Activated CD4-positive, alpha-beta T cell treated with anti-CD3 and anti-CD28 coated beads for 36 hours (primary cell): ENCODE measurements at regions of chr10 and their contacts with region 1.

Region 1: DNA sequence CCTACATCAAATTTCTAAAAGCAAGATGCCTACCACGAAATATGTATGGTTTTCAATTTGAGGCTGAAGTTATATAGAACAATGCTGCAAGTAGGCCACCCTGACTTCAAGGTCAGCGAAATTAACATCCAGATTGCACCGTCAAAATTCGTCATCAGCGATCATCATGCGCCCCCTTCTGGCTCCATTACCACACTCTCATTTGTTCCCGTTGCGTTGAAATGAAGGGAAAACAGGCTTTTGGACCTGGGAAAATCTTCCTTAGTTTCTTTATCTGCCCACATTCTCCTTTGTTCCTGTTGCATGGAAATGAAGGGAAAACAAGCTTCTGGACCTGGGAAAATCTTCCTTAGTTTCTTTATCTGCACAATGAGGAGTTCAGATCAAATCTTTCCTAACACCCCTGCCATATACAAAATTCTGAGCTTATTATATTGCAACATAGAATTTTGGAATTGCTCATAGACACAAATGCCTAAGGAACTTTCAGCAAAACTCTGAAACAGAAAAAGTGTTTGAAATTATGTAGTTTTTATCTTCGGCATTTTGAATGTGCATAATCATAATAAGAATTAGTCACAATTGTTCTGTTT is 98.2 kb upstream of the PRKCQ start:
- DNase-seq: peak; percentile 80
- ATAC-seq: peak; percentile 39
- H3K4me3 Mint-ChIP-seq: no peak overlapping the region
- H3K27ac Mint-ChIP-seq: no peak overlapping the region
- H3K4me1 Mint-ChIP-seq: peaks cover 6% of the 10 kb centered on the region
- H3K27me3 Mint-ChIP-seq: no peaks in the 10 kb centered on the region

Region 2: GRCh38 chr10:5216801-5217200 is 1461.5 kb before region 1 on chr10:
- CTCF ChIA-PET with region 1: no interaction called
- POLR2A ChIA-PET with region 1: no interaction called
- intact Hi-C with region 1: no loop called
- DNase-seq: no peak
- ATAC-seq: no peak
- H3K4me3 Mint-ChIP-seq: no peak overlapping the region
- H3K27ac Mint-ChIP-seq: no peak overlapping the region
- H3K4me1 Mint-ChIP-seq: no peaks in the 10 kb centered on the region
- H3K27me3 Mint-ChIP-seq: no peaks in the 10 kb centered on the region

Region 3: GRCh38 chr10:6108603-6109443 is 569.5 kb before region 1 on chr10:
- CTCF ChIA-PET with region 1: no interaction called
- POLR2A ChIA-PET with region 1: no interaction called
- intact Hi-C with region 1: loop called in 1 of 2 experiments (anchors 10 kb)
- DNase-seq: peak; percentile 45
- ATAC-seq: peak; percentile 63
- H3K4me3 Mint-ChIP-seq: no peak overlapping the region
- H3K27ac Mint-ChIP-seq: peak overlapping the region; percentile 89
- H3K4me1 Mint-ChIP-seq: peaks cover 31% of the 10 kb centered on the region
- H3K27me3 Mint-ChIP-seq: no peaks in the 10 kb centered on the region

Region 4: GRCh38 chr10:6416892-6417512 is 261.3 kb before region 1 on chr10:
- CTCF ChIA-PET with region 1: interaction called, 15 read pairs
- POLR2A ChIA-PET with region 1: no interaction called
- intact Hi-C with region 1: loop called (anchors 1 kb)
- DNase-seq: no peak
- ATAC-seq: peak; percentile 73
- H3K4me3 Mint-ChIP-seq: no peak overlapping the region
- H3K27ac Mint-ChIP-seq: no peak overlapping the region
- H3K4me1 Mint-ChIP-seq: no peaks in the 10 kb centered on the region
- H3K27me3 Mint-ChIP-seq: no peaks in the 10 kb centered on the region

Region 5: GRCh38 chr10:6688661-6689435 is 10.5 kb after region 1 on chr10:
- CTCF ChIA-PET with region 1: interaction called, 12 read pairs
- POLR2A ChIA-PET with region 1: no interaction called
- intact Hi-C with region 1: no loop called
- DNase-seq: no peak
- ATAC-seq: no peak
- H3K4me3 Mint-ChIP-seq: no peak overlapping the region
- H3K27ac Mint-ChIP-seq: no peak overlapping the region
- H3K4me1 Mint-ChIP-seq: no peaks in the 10 kb centered on the region
- H3K27me3 Mint-ChIP-seq: peaks cover 6% of the 10 kb centered on the region